Heart right ventricle (tissue), 16 donors: ENCODE measurements at regions of chr1 and their contacts with region 1.

Region 1: GRCh38 chr1:229156872-229157271 is 114.0 kb upstream of the RAB4A start:
- DNase-seq: peak in 1 of 2 donors; percentile 38
- ATAC-seq: peak; percentile 51 to 82 (median 70)
- H3K4me3 ChIP-seq: no peak overlapping the region
- H3K27ac ChIP-seq: peak overlapping the region in 2 of 10 donors; percentile 0 to 84
- H3K4me1 ChIP-seq: peaks cover 0 to 57% (median 0%) of the 10 kb centered on the region in 9 donors
- H3K27me3 ChIP-seq: peaks cover 0 to 7% (median 0%) of the 10 kb centered on the region in 7 donors
- CTCF ChIP-seq: peak in 8 of 9 donors; percentile 26 to 74 (median 58)

Region 2: DNA sequence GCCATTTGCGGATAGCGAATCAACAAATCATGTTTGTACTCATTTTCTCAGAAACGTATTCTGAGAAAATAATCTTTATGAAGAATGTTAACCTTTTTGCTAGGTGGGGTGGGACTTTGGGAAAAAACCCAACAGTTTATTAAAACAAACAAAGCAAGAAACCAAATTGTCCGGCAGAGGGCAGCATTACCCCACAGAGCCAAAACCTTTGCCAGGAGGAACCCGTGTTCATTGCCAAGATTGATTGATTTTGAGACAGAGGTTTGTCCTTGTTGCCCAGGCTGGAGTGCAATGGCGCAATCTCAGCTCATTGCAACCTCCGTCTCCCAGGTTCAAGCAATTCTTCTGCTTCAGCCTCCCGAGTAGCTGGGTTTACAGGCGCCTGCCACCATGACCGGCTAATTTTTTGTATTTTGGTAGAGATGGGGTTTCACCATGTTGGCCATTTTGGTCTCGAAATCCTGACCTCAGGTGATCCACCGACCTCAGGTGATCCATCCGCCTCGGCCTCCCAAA is 492.4 kb before region 1 on chr1:
- intact Hi-C with region 1: loop called in 1 of 10 experiments (anchors 5 kb)
- DNase-seq: peak; percentile 62 to 75
- ATAC-seq: peak in 4 of 8 donors; percentile 33 to 55 (median 47)
- H3K4me3 ChIP-seq: no peak overlapping the region
- H3K27ac ChIP-seq: no peak overlapping the region
- H3K4me1 ChIP-seq: peaks cover 0 to 13% (median 3%) of the 10 kb centered on the region in 9 donors
- H3K27me3 ChIP-seq: peaks cover 0 to 10% (median 0%) of the 10 kb centered on the region in 7 donors
- CTCF ChIP-seq: peak; percentile 70 to 94 (median 84)

Region 3: DNA sequence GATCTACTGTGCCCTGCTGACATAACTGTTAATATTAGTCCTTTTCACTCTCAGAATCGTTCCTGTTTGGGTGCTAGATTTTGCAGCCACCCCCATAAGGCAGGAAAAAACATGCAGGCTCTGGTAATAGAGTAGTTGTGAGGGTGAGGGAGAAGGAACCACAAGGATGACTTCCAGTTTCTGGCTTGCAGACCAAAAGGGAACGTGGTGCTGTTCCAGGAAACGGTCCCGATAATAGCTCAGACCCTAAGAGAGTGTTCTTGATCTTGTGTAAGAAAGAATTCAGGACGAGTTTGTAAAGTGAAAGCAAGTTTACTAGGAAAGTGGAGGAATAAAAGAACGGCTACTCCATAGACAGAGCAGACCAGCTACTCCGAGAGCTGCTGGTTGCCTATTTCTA is 472.3 kb before region 1 on chr1:
- intact Hi-C with region 1: loop called in 1 of 10 experiments (anchors 5 kb)
- DNase-seq: peak in 1 of 2 donors; percentile 11
- ATAC-seq: peak in 6 of 8 donors; percentile 6 to 78 (median 42)
- H3K4me3 ChIP-seq: no peak overlapping the region
- H3K27ac ChIP-seq: peak overlapping the region in 5 of 10 donors; percentile 13 to 65 (median 31)
- H3K4me1 ChIP-seq: peaks cover 0 to 14% (median 11%) of the 10 kb centered on the region in 9 donors
- H3K27me3 ChIP-seq: peaks cover 0 to 12% (median 0%) of the 10 kb centered on the region in 7 donors
- CTCF ChIP-seq: no peak

Region 4: DNA sequence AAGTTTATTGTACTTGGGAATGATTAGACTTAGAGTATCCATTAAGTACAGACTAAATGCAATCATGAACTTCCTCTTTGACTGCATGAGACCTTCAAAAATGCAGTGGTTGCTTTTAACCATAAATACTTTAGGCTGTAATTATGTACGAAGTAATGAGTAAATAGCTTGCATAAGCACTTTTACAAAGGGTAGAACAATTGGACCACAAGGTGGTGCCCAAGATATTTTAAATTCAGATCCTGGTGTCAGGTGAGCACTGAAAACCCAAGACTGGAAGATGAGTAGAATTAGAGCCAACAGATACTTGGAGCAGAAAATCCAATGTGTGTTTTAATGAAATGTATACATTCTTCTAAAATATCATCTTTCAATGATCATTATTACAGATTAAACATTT is 464.9 kb before region 1 on chr1:
- intact Hi-C with region 1: loop called in 4 of 10 experiments (anchors 2 to 10 kb)
- DNase-seq: no peak
- ATAC-seq: no peak
- H3K4me3 ChIP-seq: no peak overlapping the region
- H3K27ac ChIP-seq: no peak overlapping the region
- H3K4me1 ChIP-seq: peaks cover 0 to 1% (median 0%) of the 10 kb centered on the region in 9 donors
- H3K27me3 ChIP-seq: peaks cover 0 to 6% (median 0%) of the 10 kb centered on the region in 7 donors
- CTCF ChIP-seq: peak; percentile 15 to 58 (median 48)